Gastrocnemius medialis (tissue), 4 donors: ENCODE measurements at regions of chr6 and their contacts with region 1.

Region 1: GRCh38 chr6:134464690-134465411 is 146.9 kb upstream of the SGK1 start:
- DNase-seq: peak; percentile 83 to 91
- ATAC-seq: peak; percentile 91 to 97
- H3K4me3 ChIP-seq: no peak overlapping the region
- H3K27ac ChIP-seq: peak overlapping the region; percentile 86 to 90 (median 87)
- H3K4me1 ChIP-seq: peaks cover 34 to 56% of the 10 kb centered on the region in 2 donors
- H3K27me3 ChIP-seq: no peaks in the 10 kb centered on the region
- CTCF ChIP-seq: no peak
- POLR2A ChIP-seq: no peak

Region 2: DNA sequence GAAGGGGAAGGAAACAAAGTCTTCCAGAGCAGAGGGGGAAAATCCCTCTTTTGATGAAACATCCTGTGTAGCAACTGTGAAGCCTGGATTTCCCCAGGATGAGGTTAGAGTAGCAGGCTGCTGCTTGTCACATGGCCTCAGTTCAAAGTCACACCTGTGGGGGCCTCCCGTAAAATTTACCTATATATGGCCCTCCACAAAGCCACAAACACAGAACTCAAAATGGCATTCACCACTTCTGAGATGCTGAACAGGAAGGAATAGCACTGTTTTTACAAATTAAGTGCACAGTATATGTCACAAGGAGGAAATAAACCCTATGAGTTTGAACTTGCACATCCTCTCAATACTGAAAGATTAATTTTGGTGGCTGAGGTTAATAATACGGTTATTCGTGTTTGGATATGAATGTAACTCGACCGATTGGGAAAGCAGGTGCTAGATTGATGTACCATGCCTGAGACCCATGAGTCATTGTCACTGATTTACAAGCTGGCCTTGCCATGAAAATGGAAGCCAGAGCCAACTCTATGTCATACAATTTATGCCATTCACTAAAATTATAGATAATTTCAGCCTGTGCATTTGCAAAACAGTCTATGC is 217.5 kb before region 1 on chr6:
- in situ Hi-C with region 1: no loop called
- intact Hi-C with region 1: loop called (anchors 5 kb)
- DNase-seq: peak; percentile 39 to 47
- ATAC-seq: peak; percentile 92 to 98
- H3K4me3 ChIP-seq: no peak overlapping the region
- H3K27ac ChIP-seq: peak overlapping the region; percentile 52 to 78 (median 60)
- H3K4me1 ChIP-seq: peaks cover 40 to 41% of the 10 kb centered on the region in 2 donors
- H3K27me3 ChIP-seq: no peaks in the 10 kb centered on the region
- CTCF ChIP-seq: no peak
- POLR2A ChIP-seq: no peak

Region 3: DNA sequence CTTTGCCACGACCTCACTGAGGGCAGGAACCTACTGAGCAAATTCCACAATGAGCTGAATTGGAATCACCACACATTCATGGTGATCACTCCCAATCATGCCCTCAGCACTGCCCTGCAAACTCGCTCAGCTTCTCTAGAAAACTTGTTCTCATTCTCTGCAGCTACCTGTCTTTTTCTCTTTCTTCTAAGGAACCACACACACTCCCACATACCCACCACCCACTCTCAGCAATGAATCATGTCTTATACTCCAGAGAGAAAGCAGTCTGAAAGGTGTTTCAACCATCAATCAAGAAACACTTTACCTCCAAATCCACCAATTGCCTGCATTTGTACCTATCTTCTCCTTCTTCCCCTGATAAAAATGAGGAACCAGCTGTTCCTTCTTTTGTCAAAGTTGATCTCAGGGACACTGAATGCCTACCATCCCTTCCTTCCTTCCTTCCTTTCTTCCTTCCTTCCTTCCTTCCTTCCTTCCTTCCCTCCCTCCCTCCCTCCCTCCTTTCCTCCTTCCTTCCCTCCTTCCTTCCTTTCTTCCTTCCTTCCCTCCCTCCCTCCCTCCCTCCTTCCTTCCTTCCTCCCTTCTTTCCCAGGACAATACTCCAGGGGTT is 62.4 kb before region 1 on chr6:
- in situ Hi-C with region 1: no loop called
- intact Hi-C with region 1: loop called (anchors 5 kb)
- DNase-seq: no peak
- ATAC-seq: no peak
- H3K4me3 ChIP-seq: no peak overlapping the region
- H3K27ac ChIP-seq: peak overlapping the region in 2 of 4 donors; percentile 36 to 59
- H3K4me1 ChIP-seq: peaks cover 11 to 22% of the 10 kb centered on the region in 2 donors
- H3K27me3 ChIP-seq: no peaks in the 10 kb centered on the region
- CTCF ChIP-seq: no peak
- POLR2A ChIP-seq: no peak

Region 4: GRCh38 chr6:134640975-134641429 is 176.2 kb after region 1 on chr6:
- in situ Hi-C with region 1: no loop called
- intact Hi-C with region 1: loop called (anchors 5 kb)
- DNase-seq: peak; percentile 68 to 84
- ATAC-seq: peak; percentile 90 to 97
- H3K4me3 ChIP-seq: no peak overlapping the region
- H3K27ac ChIP-seq: peak overlapping the region in 3 of 4 donors; percentile 3 to 57 (median 21)
- H3K4me1 ChIP-seq: peaks cover 7 to 12% of the 10 kb centered on the region in 2 donors
- H3K27me3 ChIP-seq: no peaks in the 10 kb centered on the region
- CTCF ChIP-seq: peak; percentile 92 to 98 (median 95)
- POLR2A ChIP-seq: no peak

Region 5: GRCh38 chr6:134903448-134903847 is 438.6 kb after region 1 on chr6:
- in situ Hi-C with region 1: no loop called
- intact Hi-C with region 1: loop called (anchors 2 kb)
- DNase-seq: peak; percentile 58 to 67
- ATAC-seq: peak; percentile 93 to 96
- H3K4me3 ChIP-seq: no peak overlapping the region
- H3K27ac ChIP-seq: peak overlapping the region; percentile 70 to 90 (median 78)
- H3K4me1 ChIP-seq: peaks cover 13 to 23% of the 10 kb centered on the region in 2 donors
- H3K27me3 ChIP-seq: no peaks in the 10 kb centered on the region
- CTCF ChIP-seq: no peak
- POLR2A ChIP-seq: no peak